Activated T-helper 2 cell treated with anti-CD3 and anti-CD28 coated beads, Interferon-gamma antibody, Interleukin-2, Interleukin-4, amounts not matched to agents 10 μg/mL and 5 μg/mL and 100 μg/mL, durations not matched to agents 14 hours and 24 hours and 36 hours (primary cell): ENCODE measurements at regions of chr2 and their contacts with region 1.

Region 1: GRCh38 chr2:64750817-64751285 is 97.1 kb upstream of the SERTAD2 start:
- DNase-seq: peak; percentile 98
- H3K4me3 Mint-ChIP-seq: peak overlapping the region; percentile 87
- H3K27ac Mint-ChIP-seq: peak overlapping the region; percentile 96
- H3K4me1 Mint-ChIP-seq: peaks cover 29% of the 10 kb centered on the region
- H3K27me3 Mint-ChIP-seq: no peaks in the 10 kb centered on the region

Region 2: DNA sequence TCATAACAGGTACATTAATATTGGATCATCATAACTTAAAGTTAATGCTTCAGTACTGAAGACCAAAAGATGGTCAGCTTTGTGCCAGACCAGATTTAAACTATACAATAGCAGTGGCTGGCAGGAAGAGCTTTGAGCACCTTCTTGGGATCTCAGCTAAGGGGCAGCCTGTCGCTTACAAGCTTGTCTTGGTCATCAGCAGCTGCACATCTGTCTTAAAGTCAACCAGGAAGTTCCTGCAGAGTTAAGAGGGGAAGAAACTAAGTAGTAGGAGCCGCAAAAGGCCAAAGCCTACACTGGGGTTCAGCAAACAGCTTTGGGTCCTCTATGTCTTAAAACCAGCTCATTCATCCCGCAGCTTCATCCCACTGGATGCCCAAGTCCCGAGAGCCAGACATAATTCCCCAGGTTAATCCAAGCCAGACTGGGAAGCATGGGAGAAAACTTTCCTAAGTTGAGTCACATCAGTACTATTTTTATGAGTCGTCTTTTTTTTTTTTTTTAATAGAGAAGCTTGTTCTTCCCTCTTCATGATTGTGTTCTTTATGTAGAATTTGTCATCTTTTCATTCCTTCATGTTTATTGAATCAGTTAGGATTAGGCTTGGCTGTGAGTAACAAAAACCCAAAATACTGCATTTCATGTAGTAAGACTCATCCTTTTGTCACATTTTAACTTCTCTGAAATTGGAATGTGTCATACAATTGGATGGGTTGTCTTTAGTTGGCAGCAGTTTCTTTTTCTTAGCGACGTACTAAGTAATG is 156.4 kb before region 1 on chr2:
- intact Hi-C with region 1: loop called (anchors 5 kb)
- DNase-seq: no peak
- H3K4me3 Mint-ChIP-seq: no peak overlapping the region
- H3K27ac Mint-ChIP-seq: no peak overlapping the region
- H3K4me1 Mint-ChIP-seq: peaks cover 17% of the 10 kb centered on the region
- H3K27me3 Mint-ChIP-seq: no peaks in the 10 kb centered on the region

Region 3: GRCh38 chr2:64653349-64654062 is 97.3 kb before region 1 on chr2 and contains the start of gene SERTAD2:
- intact Hi-C with region 1: loop called (anchors 1 kb)
- DNase-seq: peak; percentile 82
- H3K4me3 Mint-ChIP-seq: peak within 1 kb of the TSS; percentile 91
- H3K27ac Mint-ChIP-seq: peak within 1 kb of the TSS; percentile 90
- H3K4me1 Mint-ChIP-seq: peaks cover 63% of the 10 kb centered on the region
- H3K27me3 Mint-ChIP-seq: no peaks in the 10 kb centered on the region
- total RNA-seq, gene SERTAD2: 29.2 and 31.0 TPM in 2 replicates

Region 4: DNA sequence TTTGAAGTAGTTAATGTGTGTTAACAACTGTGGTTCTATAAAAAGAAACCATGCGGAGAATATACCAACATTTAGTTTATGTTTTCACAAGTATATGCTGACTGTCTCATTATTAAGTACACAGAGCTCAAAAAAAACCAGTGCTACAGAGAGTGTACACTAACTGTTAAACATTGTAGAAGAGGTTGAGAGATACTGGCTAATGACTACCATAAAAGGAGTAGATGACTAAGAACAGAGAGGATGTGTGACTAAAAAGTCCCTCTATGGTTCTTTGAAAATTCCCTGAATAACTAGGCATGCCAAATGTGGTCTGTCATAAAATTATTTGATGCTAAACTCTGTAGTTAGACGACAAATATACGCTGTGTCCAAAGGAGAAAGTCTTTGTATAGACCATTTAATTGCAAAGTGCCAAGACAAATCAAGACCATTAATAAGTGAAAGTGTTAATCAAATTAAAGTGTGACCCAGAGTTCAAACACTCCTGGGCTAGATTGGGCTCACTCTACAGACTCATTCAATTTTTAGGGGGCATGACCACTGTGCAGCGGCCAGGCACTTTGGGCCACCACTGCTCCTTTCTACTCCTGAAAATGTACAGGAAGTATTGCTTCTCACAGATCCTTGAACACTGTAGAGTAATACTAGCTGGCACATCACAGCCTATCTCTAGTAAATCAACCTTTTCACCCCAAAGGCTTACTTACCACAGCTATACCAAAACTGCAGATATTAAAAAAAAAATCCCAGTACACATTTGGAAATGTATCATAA is 52.0 kb before region 1 on chr2:
- intact Hi-C with region 1: loop called (anchors 1 kb)
- DNase-seq: no peak
- H3K4me3 Mint-ChIP-seq: peak overlapping the region; percentile 2
- H3K27ac Mint-ChIP-seq: peak overlapping the region; percentile 84
- H3K4me1 Mint-ChIP-seq: peaks cover 59% of the 10 kb centered on the region
- H3K27me3 Mint-ChIP-seq: no peaks in the 10 kb centered on the region

Region 5: GRCh38 chr2:64711252-64711800 is 39.5 kb before region 1 on chr2:
- intact Hi-C with region 1: no loop called
- DNase-seq: no peak
- H3K4me3 Mint-ChIP-seq: no peak overlapping the region
- H3K27ac Mint-ChIP-seq: peak overlapping the region; percentile 59
- H3K4me1 Mint-ChIP-seq: peaks cover 10% of the 10 kb centered on the region
- H3K27me3 Mint-ChIP-seq: no peaks in the 10 kb centered on the region

Region 6: GRCh38 chr2:64767670-64768468 is 17.0 kb after region 1 on chr2:
- intact Hi-C with region 1: loop called (anchors 1 kb)
- DNase-seq: peak; percentile 76
- H3K4me3 Mint-ChIP-seq: peak overlapping the region; percentile 87
- H3K27ac Mint-ChIP-seq: peak overlapping the region; percentile 96
- H3K4me1 Mint-ChIP-seq: peaks cover 50% of the 10 kb centered on the region
- H3K27me3 Mint-ChIP-seq: peaks cover 6% of the 10 kb centered on the region

Region 7: DNA sequence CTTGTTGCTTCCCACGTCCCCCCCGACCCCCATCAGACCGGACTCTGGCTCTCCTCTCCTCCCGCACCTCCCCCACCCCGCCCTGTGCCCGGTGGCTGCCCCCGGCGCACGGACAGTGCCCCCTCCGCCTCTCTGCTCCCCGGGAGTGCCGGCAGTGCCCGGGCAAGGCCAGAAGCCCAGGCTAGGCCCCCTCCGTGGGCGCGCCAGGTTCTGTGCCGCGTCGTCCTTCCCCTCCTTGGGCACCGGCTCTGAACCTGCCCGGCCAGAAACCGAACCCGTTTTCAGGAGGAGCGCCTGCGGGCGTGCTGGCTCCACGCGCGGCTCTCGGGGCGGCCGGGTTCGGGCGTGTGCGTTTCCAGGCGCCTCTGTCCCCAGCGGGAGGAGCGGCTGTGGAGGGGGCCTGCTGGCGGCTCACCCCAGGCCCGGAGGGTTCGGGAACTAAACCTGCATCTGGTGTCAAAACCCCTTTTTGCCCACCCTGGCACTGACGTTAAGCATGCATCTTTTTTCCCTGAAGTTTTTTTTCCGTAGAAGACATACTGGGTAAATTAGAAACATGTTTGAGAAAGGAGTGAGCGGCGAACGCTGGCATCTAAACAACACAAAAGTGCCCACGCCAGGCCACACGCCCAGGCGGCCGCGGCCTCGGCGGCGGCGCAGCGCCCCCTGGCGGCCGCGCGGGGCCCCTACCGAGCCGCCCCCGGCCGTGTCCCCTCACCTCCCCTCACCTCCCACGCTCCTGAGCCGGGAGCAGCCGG is 114.4 kb after region 1 on chr2:
- intact Hi-C with region 1: loop called (anchors 2 kb)
- DNase-seq: peak; percentile 57
- H3K4me3 Mint-ChIP-seq: peak overlapping the region; percentile 74
- H3K27ac Mint-ChIP-seq: no peak overlapping the region
- H3K4me1 Mint-ChIP-seq: peaks cover 4% of the 10 kb centered on the region
- H3K27me3 Mint-ChIP-seq: peaks cover 13% of the 10 kb centered on the region

Region 8: GRCh38 chr2:64945973-64946768 is 195.3 kb after region 1 on chr2:
- intact Hi-C with region 1: no loop called
- DNase-seq: peak; percentile 75
- H3K4me3 Mint-ChIP-seq: peak overlapping the region; percentile 77
- H3K27ac Mint-ChIP-seq: peak overlapping the region; percentile 98
- H3K4me1 Mint-ChIP-seq: peaks cover 60% of the 10 kb centered on the region
- H3K27me3 Mint-ChIP-seq: no peaks in the 10 kb centered on the region